OCI-LY7 (cell line): ENCODE measurements at regions of chr2 and their contacts with region 1.

Region 1: GRCh38 chr2:45833968-45834344 is 182.5 kb downstream of the PRKCE start:
- DNase-seq: peak; percentile 86
- H3K4me3 ChIP-seq: peak overlapping the region; percentile 32
- H3K27ac ChIP-seq: peak overlapping the region; percentile 83
- H3K4me1 ChIP-seq: peaks cover 57% of the 10 kb centered on the region
- CTCF ChIP-seq: no peak

Region 2: GRCh38 chr2:45797451-45798230 is 36.3 kb before region 1 on chr2:
- CTCF ChIA-PET with region 1: no interaction called
- POLR2A ChIA-PET with region 1: interaction called, 10 read pairs
- intact Hi-C with region 1: no loop called
- DNase-seq: no peak
- H3K4me3 ChIP-seq: no peak overlapping the region
- H3K27ac ChIP-seq: no peak overlapping the region
- H3K4me1 ChIP-seq: no peaks in the 10 kb centered on the region
- CTCF ChIP-seq: no peak

Region 3: DNA sequence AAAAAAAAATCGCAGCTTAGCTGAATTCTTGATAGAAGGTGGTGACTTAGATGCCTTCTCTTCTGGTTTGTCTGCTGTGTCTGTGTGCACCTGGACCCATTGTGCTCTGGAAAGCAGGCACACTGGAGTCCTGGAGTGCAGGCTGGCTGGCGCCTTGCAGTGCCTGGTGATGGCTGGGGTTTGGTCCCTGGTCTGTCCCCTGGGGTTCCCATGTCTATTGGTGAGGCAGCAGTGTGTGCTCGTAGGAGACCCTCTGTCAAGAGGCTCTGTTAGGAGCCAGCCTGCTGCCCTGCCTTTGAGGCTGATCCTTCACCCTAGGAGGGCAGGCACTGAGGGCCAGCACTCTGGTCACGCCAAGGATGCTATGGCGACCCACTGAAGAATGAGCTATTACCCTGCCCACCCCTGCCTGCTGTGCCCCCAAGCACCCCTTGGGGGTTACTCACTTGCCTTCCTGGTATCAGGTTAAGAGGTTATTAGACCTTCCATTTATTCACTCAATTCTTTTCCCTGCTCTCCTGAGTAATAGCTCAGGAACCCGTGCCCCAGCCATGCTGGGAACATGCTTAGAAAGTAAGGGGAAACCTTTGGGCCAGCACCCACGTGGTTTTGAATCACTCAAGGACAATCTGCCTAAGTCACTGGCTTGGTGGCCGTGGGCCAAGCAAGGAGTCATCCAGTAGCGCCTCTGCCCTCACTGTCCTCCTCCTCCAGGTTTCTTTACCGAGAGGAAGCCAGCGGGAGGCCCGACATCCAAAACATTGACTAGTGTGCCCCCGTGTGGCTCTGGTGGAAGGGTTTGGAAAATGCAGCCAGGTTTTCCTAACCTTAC is 102.1 kb after region 1 on chr2:
- CTCF ChIA-PET with region 1: no interaction called
- POLR2A ChIA-PET with region 1: interaction called, 3 read pairs
- intact Hi-C with region 1: loop called (anchors 1 kb)
- DNase-seq: peak; percentile 68
- H3K4me3 ChIP-seq: no peak overlapping the region
- H3K27ac ChIP-seq: no peak overlapping the region
- H3K4me1 ChIP-seq: peaks cover 5% of the 10 kb centered on the region
- CTCF ChIP-seq: peak; percentile 78

Region 4: GRCh38 chr2:46416739-46417403 is 582.9 kb after region 1 on chr2:
- CTCF ChIA-PET with region 1: no interaction called
- POLR2A ChIA-PET with region 1: no interaction called
- intact Hi-C with region 1: no loop called
- DNase-seq: no peak
- H3K4me3 ChIP-seq: no peak overlapping the region
- H3K27ac ChIP-seq: no peak overlapping the region
- H3K4me1 ChIP-seq: no peaks in the 10 kb centered on the region
- CTCF ChIP-seq: no peak